ENCODE measurements at regions of chr13 and their contacts with region 1.

Region 1: DNA sequence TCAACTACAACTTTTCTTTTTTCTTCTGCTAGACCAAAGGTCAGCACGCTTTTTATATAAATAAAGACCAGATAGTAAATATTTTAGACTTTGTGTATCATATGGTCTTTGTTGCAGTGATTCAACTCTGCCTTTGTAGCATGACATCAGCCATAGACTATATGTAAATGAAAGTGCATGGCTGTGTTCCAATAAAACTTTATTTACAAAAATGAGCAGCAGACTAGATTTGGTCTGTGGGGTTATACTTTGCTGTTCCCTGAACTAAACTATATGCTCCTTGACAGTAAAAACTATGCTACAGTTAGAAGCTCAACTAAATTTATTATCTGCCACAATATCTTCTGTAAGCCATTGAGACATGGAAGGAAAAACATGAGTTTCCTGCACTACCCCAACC is 100.0 kb downstream of the RNASEH2B start:
- DNase-seq: no peak
- ATAC-seq: no peak
- H3K4me3 ChIP-seq: no peak overlapping the region
- H3K27ac ChIP-seq: no peak overlapping the region
- H3K4me1 ChIP-seq: no peaks in the 10 kb centered on the region
- H3K27me3 ChIP-seq: no peaks in the 10 kb centered on the region
- CTCF ChIP-seq: no peak

Region 2: GRCh38 chr13:50908371-50908770 is 101.2 kb before region 1 on chr13:
- CTCF ChIA-PET with region 1: no interaction called
- POLR2A ChIA-PET with region 1: no interaction called
- in situ Hi-C with region 1: no loop called
- intact Hi-C with region 1: no loop called
- DNase-seq: no peak
- ATAC-seq: no peak
- H3K4me3 ChIP-seq: no peak overlapping the region
- H3K27ac ChIP-seq: no peak overlapping the region
- H3K4me1 ChIP-seq: peaks cover 19% of the 10 kb centered on the region; the same call in 1 of the 2 replicates
- H3K27me3 ChIP-seq: no peaks in the 10 kb centered on the region
- CTCF ChIP-seq: no peak

Region 3: DNA sequence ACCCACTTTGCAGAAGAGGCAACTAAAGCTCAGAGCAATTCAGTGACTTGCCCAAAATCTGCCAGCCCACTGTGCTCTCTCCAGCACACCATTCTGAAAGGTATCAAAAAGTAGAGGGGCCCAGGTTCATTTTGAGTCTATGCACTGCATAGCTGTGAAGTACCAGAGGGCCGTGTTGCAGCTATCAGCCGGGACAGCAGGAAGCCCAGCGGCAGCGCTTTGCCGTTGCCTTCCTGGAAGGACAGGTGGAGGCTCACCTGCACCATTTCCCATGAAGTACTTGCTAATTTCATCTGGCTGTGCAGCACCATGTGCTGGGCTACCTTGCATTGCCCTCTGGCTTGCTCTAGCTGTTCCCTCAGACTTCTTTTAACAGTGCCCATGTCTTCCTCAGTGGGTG is 327.1 kb after region 1 on chr13:
- CTCF ChIA-PET with region 1: no interaction called
- POLR2A ChIA-PET with region 1: interaction called, 15 read pairs
- in situ Hi-C with region 1: no loop called
- intact Hi-C with region 1: no loop called
- DNase-seq: no peak
- ATAC-seq: no peak
- H3K4me3 ChIP-seq: no peak overlapping the region
- H3K27ac ChIP-seq: no peak overlapping the region
- H3K4me1 ChIP-seq: no peaks in the 10 kb centered on the region
- H3K27me3 ChIP-seq: no peaks in the 10 kb centered on the region
- CTCF ChIP-seq: no peak